ENCODE measurements at regions of chr1 and their contacts with region 1.

Region 1: DNA sequence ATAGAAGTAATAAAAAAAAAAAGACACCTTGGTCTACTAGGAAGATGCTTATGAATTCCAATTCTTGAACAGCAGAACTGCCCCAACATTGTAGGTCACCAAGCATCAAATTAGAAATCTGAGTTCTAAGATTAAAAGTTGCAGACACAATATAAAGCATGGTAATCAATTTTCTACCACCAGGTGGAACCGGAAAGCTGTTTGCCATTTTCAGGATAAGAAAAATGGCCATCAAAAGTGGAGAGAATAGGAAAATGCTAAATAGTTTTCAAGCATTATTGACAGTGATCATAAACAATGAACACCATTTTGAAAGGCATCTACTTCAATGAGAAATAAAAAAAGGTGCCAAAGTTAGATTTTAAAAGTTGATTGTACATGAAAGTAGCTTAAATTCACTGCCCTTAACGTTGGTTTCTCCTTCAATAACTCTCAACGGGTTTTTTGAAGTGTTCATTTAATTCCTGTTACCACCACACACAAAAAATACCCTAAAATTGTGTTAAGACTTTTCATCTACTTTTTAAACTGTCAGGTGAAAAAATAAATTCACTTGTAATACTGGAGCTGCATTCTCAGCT is 252.9 kb downstream of the KCNT2 start:
- DNase-seq: peak; percentile 43
- H3K27ac ChIP-seq: no peak overlapping the region
- CTCF ChIP-seq: peak; percentile 56

Region 2: DNA sequence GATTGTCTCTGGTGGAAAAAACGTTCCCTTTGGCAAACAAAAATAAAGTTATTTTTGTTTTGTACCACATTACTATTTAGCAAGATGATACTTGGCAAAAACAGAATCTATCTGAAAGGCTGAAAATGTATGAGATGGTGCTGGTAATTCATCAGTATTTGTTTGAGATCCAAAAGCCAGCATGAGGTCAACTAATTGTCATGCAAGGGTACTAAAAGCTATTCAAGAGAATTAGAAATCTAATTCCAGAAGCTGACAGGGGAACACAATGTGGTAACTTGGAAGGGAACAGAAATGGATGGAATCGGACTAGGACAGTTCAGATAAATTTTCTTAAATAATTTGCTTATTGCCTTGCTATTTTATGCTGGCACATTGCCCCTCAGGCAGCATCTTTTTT is 10.8 kb before region 1 on chr1:
- CTCF ChIA-PET with region 1: interaction called, 13 read pairs
- POLR2A ChIA-PET with region 1: no interaction called
- DNase-seq: no peak
- H3K27ac ChIP-seq: no peak overlapping the region
- CTCF ChIP-seq: no peak